HEK293T (cell line): ENCODE measurements at regions of chr16 and their contacts with region 1.

Region 1: DNA sequence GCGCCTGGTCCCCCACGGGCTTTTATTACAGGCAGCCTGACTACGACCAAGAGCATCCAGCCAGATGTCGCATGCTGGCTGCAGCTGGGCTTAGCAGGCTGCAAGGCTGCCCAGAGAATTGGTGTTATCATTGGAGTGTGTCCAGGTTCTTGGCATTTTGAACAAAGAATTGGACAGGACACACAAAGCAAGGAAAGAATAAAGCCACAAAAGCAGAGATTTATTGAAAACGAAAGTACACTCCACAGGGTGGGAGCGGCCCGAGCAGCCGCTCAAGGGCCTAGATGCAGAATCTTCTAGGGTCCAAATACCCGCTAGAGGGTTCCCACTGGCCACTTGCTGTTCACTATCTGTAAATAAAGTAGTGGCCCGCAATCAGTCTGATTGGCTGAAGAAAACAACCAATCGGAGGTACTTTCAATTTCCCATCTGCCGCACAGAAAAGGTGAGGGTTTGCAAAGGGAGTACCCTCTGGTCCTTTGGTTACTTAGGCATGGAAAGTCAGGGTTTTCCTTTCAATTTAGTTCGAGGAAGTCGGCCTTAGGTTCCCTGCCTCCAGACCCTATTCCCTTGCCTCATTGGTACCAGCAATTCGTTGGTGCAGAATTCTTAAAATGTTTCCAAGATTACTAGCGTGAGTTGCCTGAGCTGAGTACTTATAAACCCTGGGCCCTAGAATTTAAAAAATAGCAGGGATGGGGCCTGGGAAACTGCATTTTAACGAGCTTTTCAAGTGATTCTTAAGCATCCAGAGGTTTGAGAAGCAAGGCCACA is 38.5 kb upstream of the CNEP1R1 start:
- DNase-seq: no peak

Region 2: DNA sequence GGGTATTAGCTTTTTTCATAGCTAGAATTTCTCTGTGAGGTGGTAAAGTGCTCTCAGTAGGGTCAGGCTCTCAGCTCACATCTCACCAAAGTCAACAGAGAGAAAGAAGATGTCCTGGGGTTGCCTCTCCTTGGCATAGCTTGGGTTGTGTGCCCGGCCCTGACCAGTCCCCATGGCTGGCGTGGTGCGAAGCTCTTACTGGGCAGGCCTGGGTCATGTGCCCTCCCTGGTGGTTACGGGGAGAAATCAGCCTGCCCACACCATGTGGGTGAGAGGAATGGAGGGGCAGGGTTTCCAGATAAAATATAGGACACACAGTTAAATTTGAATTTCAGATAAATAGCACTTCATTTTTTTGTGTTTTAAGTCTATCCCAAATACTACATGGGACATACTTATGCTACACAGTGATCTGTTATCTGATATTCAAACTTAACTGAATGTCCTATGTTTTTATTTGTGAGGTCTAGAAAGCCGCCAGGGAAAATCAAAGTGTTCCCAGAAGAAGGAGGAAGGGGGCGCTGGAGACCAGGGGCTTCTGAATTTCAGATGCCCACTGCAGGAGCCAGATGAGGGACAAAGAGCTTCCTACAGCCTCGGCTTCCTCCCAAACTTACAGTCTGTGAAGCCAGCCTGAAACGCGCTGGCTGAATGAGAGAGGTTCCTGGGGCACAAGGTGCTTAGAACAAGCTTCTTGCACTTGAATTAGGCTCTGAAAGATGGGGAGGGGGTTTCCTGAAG is 607.0 kb after region 1 on chr16:
- CTCF ChIA-PET with region 1: interaction called, 11 read pairs
- POLR2A ChIA-PET with region 1: no interaction called
- DNase-seq: peak; percentile 29